Common myeloid progenitor, CD34-positive (primary cell): ENCODE measurements at regions of chr19 and their contacts with region 1.

Region 1: GRCh38 chr19:39133431-39134270 is 8.1 kb downstream of the PAK4 start:
- DNase-seq: no peak
- H3K4me3 ChIP-seq: peak overlapping the region in 2 of 7 experiments; percentile 29 to 36
- H3K27ac ChIP-seq: no peak overlapping the region
- H3K4me1 ChIP-seq: peaks cover 0 to 33% (median 21%) of the 10 kb centered on the region in 4 experiments
- H3K27me3 ChIP-seq: no peaks in the 10 kb centered on the region

Region 2: DNA sequence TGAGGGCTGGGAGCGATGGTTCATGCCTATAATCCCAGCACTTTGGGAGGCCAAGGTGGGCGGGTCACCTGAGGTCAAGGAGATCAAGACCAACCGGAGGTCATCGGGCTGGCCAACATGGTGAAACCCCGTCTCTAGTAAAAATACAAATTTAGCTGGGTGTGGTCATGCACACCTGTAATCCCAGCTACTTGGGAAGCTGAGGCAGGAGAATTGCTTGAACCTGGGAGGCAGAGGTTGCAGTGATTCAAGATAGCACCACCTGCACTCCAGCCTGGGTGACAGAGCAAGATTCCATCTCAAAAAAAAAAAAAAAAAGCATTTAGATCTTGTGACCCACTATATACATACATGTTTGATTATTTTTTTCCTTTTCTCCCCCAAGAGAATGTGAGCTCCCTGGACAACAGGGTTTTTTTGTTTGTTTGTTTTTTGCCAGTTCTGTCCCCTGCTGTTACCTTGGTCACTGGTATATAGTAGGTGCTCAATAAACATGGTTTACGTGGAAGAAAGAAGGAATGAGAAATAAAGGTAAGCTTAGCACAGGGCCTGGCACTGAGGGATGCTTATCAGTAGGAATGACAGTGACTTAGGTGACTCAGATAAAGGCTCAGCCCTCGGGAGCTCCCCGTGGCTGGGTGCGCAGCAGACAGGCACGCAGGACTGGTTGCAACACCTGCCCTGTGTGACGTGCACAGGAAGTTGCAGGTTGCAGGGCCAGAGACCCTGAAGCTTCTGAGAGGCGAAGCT is 18.7 kb before region 1 on chr19:
- CTCF ChIA-PET with region 1: no interaction called
- POLR2A ChIA-PET with region 1: no interaction called
- DNase-seq: no peak
- H3K4me3 ChIP-seq: no peak overlapping the region
- H3K27ac ChIP-seq: no peak overlapping the region
- H3K4me1 ChIP-seq: peaks cover 0 to 5% (median 1%) of the 10 kb centered on the region in 4 experiments
- H3K27me3 ChIP-seq: no peaks in the 10 kb centered on the region

Region 3: GRCh38 chr19:39144245-39145071 is 10.8 kb after region 1 on chr19:
- CTCF ChIA-PET with region 1: interaction called, 13 read pairs
- POLR2A ChIA-PET with region 1: no interaction called
- DNase-seq: peak; percentile 32 to 58 (median 45)
- H3K4me3 ChIP-seq: peak overlapping the region in 5 of 7 experiments; percentile 1 to 66 (median 43)
- H3K27ac ChIP-seq: peak overlapping the region in 1 of 2 experiments; percentile 29
- H3K4me1 ChIP-seq: peaks cover 2 to 49% (median 45%) of the 10 kb centered on the region in 4 experiments
- H3K27me3 ChIP-seq: no peaks in the 10 kb centered on the region

Region 4: GRCh38 chr19:39160334-39160791 is 26.7 kb after region 1 on chr19:
- CTCF ChIA-PET with region 1: no interaction called
- POLR2A ChIA-PET with region 1: no interaction called
- DNase-seq: no peak
- H3K4me3 ChIP-seq: no peak overlapping the region
- H3K27ac ChIP-seq: no peak overlapping the region
- H3K4me1 ChIP-seq: peaks cover 0 to 36% (median 13%) of the 10 kb centered on the region in 4 experiments
- H3K27me3 ChIP-seq: no peaks in the 10 kb centered on the region

Region 5: GRCh38 chr19:39199025-39199424 is 65.4 kb after region 1 on chr19:
- CTCF ChIA-PET with region 1: no interaction called
- POLR2A ChIA-PET with region 1: no interaction called
- DNase-seq: no peak
- H3K4me3 ChIP-seq: no peak overlapping the region
- H3K27ac ChIP-seq: no peak overlapping the region
- H3K4me1 ChIP-seq: peaks cover 0 to 19% (median 7%) of the 10 kb centered on the region in 4 experiments
- H3K27me3 ChIP-seq: peaks cover 0 to 87% (median 34%) of the 10 kb centered on the region in 5 experiments